Activated T-helper 1 cell treated with anti-CD3 and anti-CD28 coated beads, Interleukin-12 subunit alpha, Interleukin-12 subunit beta, Interleukin-2, Interleukin-4 antibody, amounts not matched to agents 30 ng/mL and 10 ng/mL and 1 ng/mL, durations not matched to agents 14 hours and 24 hours and 36 hours (primary cell): ENCODE measurements at regions of chr16 and their contacts with region 1.

Region 1: DNA sequence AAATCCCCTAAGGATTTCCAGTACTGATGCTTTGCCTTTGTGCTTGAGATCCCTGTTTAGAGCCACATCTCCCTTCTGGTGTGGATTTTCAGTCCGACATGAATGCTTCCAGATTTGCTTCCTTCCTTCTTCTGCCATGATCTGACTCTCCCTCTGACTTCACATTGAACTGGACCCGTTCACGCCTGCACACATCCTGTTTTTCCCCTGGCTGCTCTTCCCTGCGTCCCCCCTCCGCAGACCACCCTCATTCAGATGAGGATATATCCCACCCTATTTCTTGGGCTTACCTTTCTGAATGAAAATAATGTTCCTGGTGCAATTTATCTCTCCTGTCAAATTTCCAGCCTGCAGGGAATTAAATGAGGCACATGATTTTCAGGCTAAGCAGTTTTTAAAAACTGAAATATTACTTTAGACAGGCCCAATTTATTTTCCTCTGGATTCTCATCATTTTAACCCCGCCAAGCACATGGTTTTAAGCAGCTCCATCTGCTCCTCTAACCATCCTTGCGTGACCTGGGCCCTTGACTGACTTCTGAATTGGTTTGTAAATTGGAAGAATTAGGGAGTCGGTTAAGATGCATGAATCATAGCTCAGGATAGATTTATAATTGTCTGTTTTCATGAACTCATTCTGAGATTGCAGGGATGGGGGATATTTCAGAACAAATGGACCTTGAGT is 59.2 kb downstream of the BMERB1 start:
- DNase-seq: no peak
- H3K4me3 Mint-ChIP-seq: no peak overlapping the region
- H3K27ac Mint-ChIP-seq: peak overlapping the region; percentile 45
- H3K4me1 Mint-ChIP-seq: peaks cover 42% of the 10 kb centered on the region
- H3K27me3 Mint-ChIP-seq: no peaks in the 10 kb centered on the region

Region 2: DNA sequence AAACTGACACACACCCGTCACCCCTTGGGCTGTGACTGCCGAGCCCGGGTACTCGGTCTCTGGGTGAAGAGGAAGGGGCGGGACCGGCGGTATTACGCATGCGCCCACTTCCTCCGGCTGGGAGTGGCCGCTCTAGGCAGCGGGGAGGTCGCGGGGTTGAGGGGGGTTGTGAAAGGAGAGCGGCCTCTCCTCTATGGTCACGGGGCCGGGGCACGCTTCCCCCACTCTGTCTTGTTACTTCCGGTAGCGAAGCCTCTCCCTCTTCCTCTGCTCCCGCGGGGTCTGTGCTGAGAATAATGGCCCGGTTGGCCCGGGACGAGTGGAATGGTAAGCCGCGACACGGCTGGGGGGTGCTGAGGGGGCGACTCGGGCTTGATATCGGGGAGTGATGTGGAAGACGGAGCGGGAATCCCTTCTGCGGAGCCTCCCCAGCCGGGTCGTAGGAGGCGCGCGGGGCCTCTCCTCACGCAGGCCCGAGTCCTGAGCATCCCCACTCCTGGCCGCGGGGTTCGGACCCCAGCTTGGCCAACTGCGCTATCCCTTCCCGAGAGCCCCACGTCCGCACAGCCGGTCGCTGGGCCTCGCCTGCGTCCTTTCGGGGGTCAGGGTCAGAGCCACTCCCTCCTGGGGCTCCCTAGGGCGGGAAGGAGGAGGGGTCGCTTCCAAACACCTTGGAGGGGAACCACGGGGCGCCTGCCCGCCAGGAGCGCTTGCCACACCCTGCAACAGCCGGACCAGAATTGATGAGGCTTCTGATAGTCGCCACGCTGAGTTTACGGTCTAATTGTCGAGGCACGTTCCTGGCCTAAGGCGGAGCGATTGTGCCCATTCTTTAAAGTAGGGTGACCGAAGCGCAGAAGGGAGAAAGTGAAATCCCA is 860.7 kb before region 1 on chr16 and contains the start of gene BFAR:
- intact Hi-C with region 1: loop called (anchors 5 kb)
- DNase-seq: peak; percentile 99
- H3K4me3 Mint-ChIP-seq: peak within 1 kb of the TSS; percentile 100
- H3K27ac Mint-ChIP-seq: peak within 1 kb of the TSS; percentile 100
- H3K4me1 Mint-ChIP-seq: peaks cover 60% of the 10 kb centered on the region
- H3K27me3 Mint-ChIP-seq: no peaks in the 10 kb centered on the region
- total RNA-seq, gene BFAR: 59.8 and 64.8 TPM in 2 replicates

Region 3: DNA sequence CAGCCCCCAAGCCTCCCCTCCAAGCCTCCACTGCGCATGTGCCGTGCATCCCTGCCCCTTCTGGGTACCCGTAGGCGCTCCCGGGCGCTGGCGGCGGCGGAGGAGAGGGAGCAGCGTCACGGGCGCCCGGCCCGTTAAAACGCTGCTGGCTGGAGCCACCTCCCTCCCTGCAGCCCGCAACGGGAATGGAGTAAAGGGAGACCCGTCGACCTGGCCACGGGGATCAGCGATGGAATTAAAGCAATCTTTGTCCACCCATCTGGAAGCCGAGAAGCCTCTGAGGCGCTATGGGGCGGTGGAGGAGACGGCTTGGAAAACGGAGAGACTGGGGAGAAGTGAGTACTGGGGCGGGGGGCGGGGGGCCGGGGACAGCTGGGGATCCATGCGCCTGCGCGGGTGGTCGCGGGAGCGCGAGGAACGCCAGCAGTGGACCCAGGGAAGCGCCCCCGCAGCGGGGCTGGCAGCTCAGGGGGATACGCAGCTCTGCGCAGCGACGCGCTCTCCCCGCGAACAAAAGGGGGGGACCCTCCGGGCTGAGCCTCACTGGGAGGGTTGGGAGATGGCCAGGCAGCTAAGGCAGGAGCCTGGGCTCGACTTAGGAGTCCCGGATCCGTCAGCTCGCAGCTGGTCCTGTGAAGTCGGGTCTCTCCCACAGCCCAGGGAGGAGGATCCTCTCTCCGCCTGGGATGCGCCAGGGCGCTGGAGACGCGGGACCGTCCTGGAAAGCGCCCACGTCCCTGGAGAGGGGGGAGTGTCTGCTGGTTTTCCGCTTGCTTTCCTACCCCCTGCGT is 59.0 kb before region 1 on chr16 and contains the start of gene BMERB1:
- intact Hi-C with region 1: loop called (anchors 5 kb)
- DNase-seq: peak; percentile 31
- H3K4me3 Mint-ChIP-seq: peak within 1 kb of the TSS; percentile 93
- H3K27ac Mint-ChIP-seq: peak within 1 kb of the TSS; percentile 52
- H3K4me1 Mint-ChIP-seq: peaks cover 17% of the 10 kb centered on the region
- H3K27me3 Mint-ChIP-seq: peaks cover 23% of the 10 kb centered on the region
- total RNA-seq, gene BMERB1: 16.0 and 17.4 TPM in 2 replicates